Right ventricle myocardium inferior (tissue), 1 donor: ENCODE measurements at regions of chr3 and their contacts with region 1.

Region 1: DNA sequence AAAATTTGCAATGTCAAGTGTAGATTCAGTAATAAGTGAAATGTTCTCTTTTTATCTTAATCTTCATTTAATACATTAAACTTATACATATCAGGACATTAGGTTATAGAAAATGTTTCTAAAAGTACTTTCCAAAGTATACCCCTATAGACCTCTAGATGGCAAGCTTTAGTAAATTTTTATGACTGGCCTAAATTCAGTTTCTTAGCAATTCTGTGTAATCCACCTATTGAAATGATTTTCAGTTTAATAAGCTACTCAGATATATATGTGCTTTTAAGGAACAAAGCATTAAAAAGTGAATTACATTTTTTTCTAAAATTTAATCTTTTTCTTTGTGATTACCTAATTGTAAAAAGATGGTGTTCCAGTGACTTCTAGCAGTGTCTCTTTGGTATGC is 342.2 kb downstream of the GBE1 start:
- DNase-seq: no peak
- ATAC-seq: no peak

Region 2: DNA sequence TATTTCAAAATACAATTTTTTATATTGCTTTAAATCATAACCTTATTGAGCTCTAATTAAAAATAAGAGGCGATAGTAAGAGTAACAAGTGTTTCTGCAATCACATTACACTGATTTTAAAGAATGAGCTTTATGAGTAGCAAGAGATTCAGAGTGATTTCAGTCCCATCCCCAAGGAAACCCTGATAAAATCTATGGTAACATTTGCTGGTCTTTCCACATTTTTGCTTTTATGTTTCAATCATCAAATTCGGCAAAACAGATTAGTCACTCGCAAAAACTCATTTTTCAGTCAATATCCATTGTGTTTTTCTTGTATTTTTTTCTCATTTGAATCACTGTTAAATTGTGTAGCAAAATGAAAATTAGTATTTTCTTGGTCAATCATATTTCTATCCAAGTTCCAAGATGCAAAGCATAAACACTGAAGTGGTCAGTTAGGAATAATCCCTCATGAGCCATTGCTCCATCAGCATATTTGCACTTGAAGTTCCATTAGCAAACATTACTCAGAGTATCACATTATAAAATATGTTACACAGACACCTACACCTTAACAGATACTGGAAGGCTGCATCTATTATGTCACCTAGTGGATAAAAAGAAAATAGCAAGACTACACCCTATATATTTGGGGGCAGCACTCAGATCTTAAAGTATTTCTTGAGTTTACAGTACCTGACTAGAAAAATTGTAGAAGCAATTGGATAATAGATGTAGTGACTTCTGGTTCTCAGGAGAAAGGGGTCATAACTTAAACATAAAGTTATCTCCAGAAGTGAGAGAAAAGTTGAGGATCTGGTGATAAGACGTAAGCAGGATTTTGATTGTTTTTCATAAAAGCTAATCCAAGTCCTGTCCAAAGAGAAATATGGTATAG is 80.3 kb before region 1 on chr3:
- intact Hi-C with region 1: no loop called
- DNase-seq: no peak
- ATAC-seq: no peak

Region 3: GRCh38 chr3:81462921-81463320 is 43.7 kb after region 1 on chr3:
- intact Hi-C with region 1: no loop called
- DNase-seq: no peak
- ATAC-seq: no peak

Region 4: GRCh38 chr3:82093641-82094040 is 674.4 kb after region 1 on chr3:
- intact Hi-C with region 1: loop called (anchors 5 kb)
- DNase-seq: no peak
- ATAC-seq: no peak